PC-3 (cell line): ENCODE measurements at regions of chr11 and their contacts with region 1.

Region 1: GRCh38 chr11:2420502-2421225 is 20.1 kb downstream of the TSSC4 start:
- DNase-seq: peak; percentile 77
- ATAC-seq: peak; percentile 95
- H3K4me3 ChIP-seq: no peak overlapping the region
- H3K27ac ChIP-seq: no peak overlapping the region
- H3K4me1 ChIP-seq: 0 out of 2 replicates have a peak, but pooled peaks cover 3% of the 10 kb centered on the region
- H3K27me3 ChIP-seq: no peaks in the 10 kb centered on the region
- CTCF ChIP-seq: peak; percentile 88

Region 2: GRCh38 chr11:2305140-2305840 is 115.4 kb before region 1 on chr11:
- CTCF ChIA-PET with region 1: interaction called, 44 read pairs
- POLR2A ChIA-PET with region 1: no interaction called
- intact Hi-C with region 1: no loop called
- DNase-seq: peak; percentile 77
- ATAC-seq: peak; percentile 92
- H3K4me3 ChIP-seq: no peak overlapping the region
- H3K27ac ChIP-seq: no peak overlapping the region
- H3K4me1 ChIP-seq: no peaks in the 10 kb centered on the region
- H3K27me3 ChIP-seq: no peaks in the 10 kb centered on the region
- CTCF ChIP-seq: peak; percentile 85

Region 3: GRCh38 chr11:2348986-2349385 is 71.7 kb before region 1 on chr11:
- CTCF ChIA-PET with region 1: no interaction called
- POLR2A ChIA-PET with region 1: no interaction called
- intact Hi-C with region 1: no loop called
- DNase-seq: peak; percentile 7
- ATAC-seq: no peak
- H3K4me3 ChIP-seq: no peak overlapping the region
- H3K27ac ChIP-seq: no peak overlapping the region
- H3K4me1 ChIP-seq: no peaks in the 10 kb centered on the region
- H3K27me3 ChIP-seq: no peaks in the 10 kb centered on the region
- CTCF ChIP-seq: no peak

Region 4: DNA sequence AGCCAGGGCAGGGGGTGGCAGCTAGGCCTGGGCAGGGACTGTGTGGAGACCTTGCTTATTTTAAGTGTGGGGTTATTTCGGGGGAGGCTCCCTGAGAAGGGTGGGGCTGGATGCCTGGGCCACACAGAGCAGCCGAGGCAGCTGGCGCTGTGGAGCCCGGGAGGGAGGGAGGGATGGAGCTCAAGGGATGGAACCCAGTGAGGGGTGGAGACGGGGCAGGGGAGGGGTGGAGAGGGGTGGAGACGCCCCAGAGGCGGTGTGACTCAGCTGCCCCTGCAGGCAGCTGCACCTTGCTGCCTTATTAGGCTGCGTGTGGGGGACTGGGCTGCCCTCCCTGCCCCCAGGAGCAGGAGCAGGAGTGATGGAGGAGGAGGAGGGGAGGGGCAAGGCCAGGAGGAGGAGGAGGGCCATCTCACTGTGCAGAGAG is 29.9 kb before region 1 on chr11:
- CTCF ChIA-PET with region 1: no interaction called
- POLR2A ChIA-PET with region 1: no interaction called
- intact Hi-C with region 1: no loop called
- DNase-seq: peak; percentile 34
- ATAC-seq: peak; percentile 29; the same call in 1 of the 2 replicates
- H3K4me3 ChIP-seq: no peak overlapping the region
- H3K27ac ChIP-seq: no peak overlapping the region
- H3K4me1 ChIP-seq: no peaks in the 10 kb centered on the region
- H3K27me3 ChIP-seq: no peaks in the 10 kb centered on the region
- CTCF ChIP-seq: no peak

Region 5: GRCh38 chr11:2885676-2886081 is 465.0 kb after region 1 on chr11 and contains the start of gene CDKN1C:
- CTCF ChIA-PET with region 1: no interaction called
- POLR2A ChIA-PET with region 1: no interaction called
- intact Hi-C with region 1: loop called (anchors 10 kb)
- DNase-seq: peak; percentile 75
- ATAC-seq: peak; percentile 59
- H3K4me3 ChIP-seq: peak within 1 kb of the TSS; percentile 82
- H3K27ac ChIP-seq: no peak within 1 kb of the TSS
- H3K4me1 ChIP-seq: peaks cover 11% of the 10 kb centered on the region
- H3K27me3 ChIP-seq: no peaks in the 10 kb centered on the region
- CTCF ChIP-seq: no peak
- total RNA-seq, gene CDKN1C: 12.0 and 12.9 TPM in 2 replicates